ENCODE measurements at regions of chr19 and their contacts with region 1.

Region 1: GRCh38 chr19:55503502-55504251 is 15.4 kb downstream of the SSC5D start:
- DNase-seq: peak; percentile 96
- ATAC-seq: peak; percentile 94
- H3K4me3 Mint-ChIP-seq: no peak overlapping the region
- H3K27ac Mint-ChIP-seq: no peak overlapping the region
- H3K4me1 Mint-ChIP-seq: no peaks in the 10 kb centered on the region
- H3K27me3 Mint-ChIP-seq: peaks cover 86% of the 10 kb centered on the region
- CTCF ChIP-seq: peak; percentile 99

Region 2: GRCh38 chr19:55437410-55438075 is 66.1 kb before region 1 on chr19:
- CTCF ChIA-PET with region 1: interaction called, 12 read pairs
- POLR2A ChIA-PET with region 1: no interaction called
- DNase-seq: peak; percentile 85
- ATAC-seq: peak; percentile 73
- H3K4me3 Mint-ChIP-seq: no peak overlapping the region
- H3K27ac Mint-ChIP-seq: no peak overlapping the region
- H3K4me1 Mint-ChIP-seq: peaks cover 15% of the 10 kb centered on the region
- H3K27me3 Mint-ChIP-seq: peaks cover 11% of the 10 kb centered on the region
- CTCF ChIP-seq: no peak

Region 3: GRCh38 chr19:55467236-55468053 is 36.2 kb before region 1 on chr19:
- CTCF ChIA-PET with region 1: interaction called, 63 read pairs
- POLR2A ChIA-PET with region 1: no interaction called
- DNase-seq: peak; percentile 77
- ATAC-seq: peak; percentile 78
- H3K4me3 Mint-ChIP-seq: no peak overlapping the region
- H3K27ac Mint-ChIP-seq: no peak overlapping the region
- H3K4me1 Mint-ChIP-seq: peaks cover 27% of the 10 kb centered on the region
- H3K27me3 Mint-ChIP-seq: peaks cover 33% of the 10 kb centered on the region
- CTCF ChIP-seq: peak; percentile 98

Region 4: DNA sequence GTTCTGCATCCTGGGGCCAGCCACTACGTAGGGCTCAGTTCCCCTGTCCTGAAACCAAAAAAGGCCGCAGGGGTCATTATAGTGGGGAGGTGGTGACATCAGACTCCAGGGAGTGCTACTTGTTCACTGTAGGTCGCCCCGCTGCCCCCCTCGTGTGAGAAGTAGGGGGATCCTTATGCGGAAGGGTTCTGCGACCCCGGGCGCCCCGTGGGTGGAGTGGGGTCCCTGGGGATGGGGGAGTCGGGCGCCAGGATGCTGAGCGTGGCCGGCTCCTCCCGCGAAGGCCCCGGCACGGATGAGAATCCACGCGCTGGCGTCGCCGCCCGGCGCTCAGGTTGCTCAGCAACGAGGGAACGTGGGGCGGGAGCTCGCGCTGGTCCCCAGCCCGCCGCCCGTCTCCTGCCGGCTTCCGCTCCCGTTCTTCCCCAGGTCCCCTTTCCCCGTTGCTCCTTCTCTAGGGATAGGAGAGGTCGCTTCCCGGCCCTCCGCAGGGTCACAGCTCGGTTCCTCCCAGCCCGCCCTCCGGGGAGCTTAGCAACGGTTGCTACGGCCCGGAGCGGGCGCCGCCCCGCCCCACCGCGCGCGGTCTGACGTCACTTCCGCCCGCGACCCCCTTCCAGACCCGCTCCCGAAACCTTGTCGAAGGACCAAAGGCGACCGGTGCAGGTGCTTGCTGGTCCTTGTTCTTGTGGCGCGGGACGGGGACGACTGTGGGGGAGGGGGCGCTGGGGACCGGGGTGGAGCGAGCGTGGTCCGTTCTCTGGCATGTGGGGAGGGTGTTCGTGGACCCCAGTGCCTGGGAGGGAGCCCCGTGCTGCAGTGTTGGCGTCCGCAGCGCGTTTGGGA is 18.9 kb before region 1 on chr19 and contains the start of gene NAT14:
- CTCF ChIA-PET with region 1: interaction called, 96 read pairs
- POLR2A ChIA-PET with region 1: interaction called, 4 read pairs
- DNase-seq: peak; percentile 89
- ATAC-seq: peak; percentile 58
- H3K4me3 Mint-ChIP-seq: peak within 1 kb of the TSS; percentile 82
- H3K27ac Mint-ChIP-seq: peak within 1 kb of the TSS; percentile 87
- H3K4me1 Mint-ChIP-seq: peaks cover 23% of the 10 kb centered on the region
- H3K27me3 Mint-ChIP-seq: no peaks in the 10 kb centered on the region
- CTCF ChIP-seq: no peak
- total RNA-seq, gene NAT14: 71.9 to 87.7 TPM (median 74.8 TPM) in 3 replicates

Region 5: DNA sequence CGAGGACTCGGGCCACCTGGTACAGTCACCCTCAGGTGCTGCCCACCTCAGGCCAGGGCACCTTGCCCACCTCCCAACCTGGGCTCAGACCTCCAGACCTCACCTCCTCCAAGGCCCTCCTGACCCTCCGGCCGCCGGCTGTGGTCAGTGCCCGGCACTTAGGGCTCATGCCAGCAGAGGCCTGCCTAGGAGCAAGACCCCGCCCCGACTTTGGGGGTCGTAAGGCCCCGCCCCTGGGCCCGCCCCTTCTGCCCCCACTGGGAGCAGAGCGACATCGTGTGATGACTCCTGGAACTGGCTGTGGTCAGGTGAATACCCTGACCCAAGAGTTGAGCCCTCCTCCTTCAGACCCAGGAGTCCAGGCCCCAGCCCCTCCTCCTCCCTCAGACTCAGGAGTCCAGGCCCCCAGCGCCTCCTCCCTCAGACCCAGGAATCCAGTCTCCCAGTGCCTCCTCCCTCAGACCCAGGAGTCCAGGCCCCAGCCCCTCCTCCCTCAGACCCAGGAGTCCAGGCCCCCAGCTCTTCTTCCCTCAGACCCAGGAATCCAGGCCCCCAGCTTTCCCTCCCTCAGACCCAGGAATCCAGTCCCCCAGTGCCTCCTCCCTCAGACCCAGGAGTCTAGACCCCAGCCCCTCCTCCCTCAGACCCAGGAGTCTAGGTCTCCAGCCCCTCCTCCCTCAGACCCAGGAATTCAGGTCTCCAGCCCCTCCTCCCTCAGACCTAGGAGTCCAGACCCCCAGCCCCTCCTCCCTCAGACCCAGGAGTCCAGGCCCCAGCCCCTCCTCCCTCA is 33.5 kb after region 1 on chr19 and contains the start of gene SBK2:
- CTCF ChIA-PET with region 1: interaction called, 10 read pairs
- POLR2A ChIA-PET with region 1: no interaction called
- DNase-seq: peak; percentile 96
- ATAC-seq: peak; percentile 97
- H3K4me3 Mint-ChIP-seq: peak within 1 kb of the TSS; percentile 37
- H3K27ac Mint-ChIP-seq: no peak within 1 kb of the TSS
- H3K4me1 Mint-ChIP-seq: peaks cover 11% of the 10 kb centered on the region
- H3K27me3 Mint-ChIP-seq: peaks cover 7% of the 10 kb centered on the region
- CTCF ChIP-seq: 0 out of 2 replicates have a peak, but pooled peaks have one; percentile 25
- total RNA-seq, gene SBK2: 5.2 to 6.4 TPM (median 5.8 TPM) in 3 replicates

Region 6: DNA sequence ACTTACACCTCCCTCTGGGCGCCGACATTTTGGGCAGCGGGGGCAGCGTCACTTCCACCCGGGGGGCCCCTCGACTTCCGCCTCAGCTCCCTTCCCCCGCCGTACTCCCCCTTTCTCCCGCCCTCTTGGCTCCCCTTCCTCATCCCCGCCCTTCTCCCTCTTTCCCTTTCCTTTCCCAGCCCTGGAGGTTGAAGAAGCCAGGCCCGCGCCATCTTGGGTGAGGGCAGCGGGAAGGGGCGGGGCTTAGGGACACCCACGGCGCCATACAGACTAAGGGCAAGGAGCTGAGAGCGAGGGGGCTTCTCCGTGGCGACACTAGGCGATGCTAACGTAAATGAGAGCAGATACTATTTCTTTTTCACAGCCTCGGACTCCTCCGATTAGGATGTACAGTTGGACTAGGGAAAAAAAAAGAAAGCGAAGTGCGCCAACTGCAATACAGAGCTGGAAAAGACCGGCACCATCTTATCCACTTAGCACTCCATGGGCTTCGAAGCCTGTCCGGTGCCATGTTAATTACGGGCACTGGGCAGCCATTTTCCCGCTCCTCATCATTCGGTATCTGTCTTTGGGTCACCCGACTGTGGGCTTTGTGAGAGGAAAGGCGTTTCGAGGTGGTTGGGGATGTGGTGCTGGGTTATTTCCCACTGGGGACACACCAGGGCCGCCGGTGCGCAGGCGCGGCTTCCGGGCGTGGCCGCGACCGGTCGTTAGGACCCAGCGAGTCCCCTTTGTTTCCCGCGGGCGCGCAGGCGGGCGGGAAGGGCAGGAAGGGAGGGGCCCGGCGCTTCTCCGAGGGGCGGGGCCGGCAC is 96.0 kb after region 1 on chr19 and contains the start of gene FIZ1:
- CTCF ChIA-PET with region 1: interaction called, 16 read pairs
- POLR2A ChIA-PET with region 1: no interaction called
- DNase-seq: peak; percentile 98
- ATAC-seq: peak; percentile 54
- H3K4me3 Mint-ChIP-seq: peak within 1 kb of the TSS; percentile 98
- H3K27ac Mint-ChIP-seq: peak within 1 kb of the TSS; percentile 100
- H3K4me1 Mint-ChIP-seq: peaks cover 29% of the 10 kb centered on the region
- H3K27me3 Mint-ChIP-seq: no peaks in the 10 kb centered on the region; the same call in 1 of the 2 replicates
- CTCF ChIP-seq: no peak
- total RNA-seq, gene FIZ1: 20.1 to 22.7 TPM (median 20.6 TPM) in 3 replicates

Region 7: DNA sequence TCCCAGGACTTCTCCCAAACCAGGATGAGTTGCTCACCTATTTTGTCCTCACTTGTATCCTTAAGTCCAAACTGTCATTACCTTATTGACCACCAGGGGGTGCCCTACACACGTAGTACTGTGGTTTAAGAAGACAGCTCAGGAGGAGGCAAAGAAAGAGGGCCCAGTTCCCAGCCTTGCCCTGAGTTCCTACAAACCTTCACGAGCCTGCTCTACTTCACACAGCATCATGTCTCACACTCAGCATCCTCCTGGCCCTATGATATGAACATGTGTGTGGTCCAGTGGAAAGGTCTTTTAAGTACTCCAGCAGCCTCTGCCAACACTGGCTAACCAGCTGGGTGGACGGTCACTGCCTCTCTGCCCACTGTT is 128.8 kb after region 1 on chr19:
- CTCF ChIA-PET with region 1: interaction called, 19 read pairs
- POLR2A ChIA-PET with region 1: no interaction called
- DNase-seq: peak; percentile 92
- ATAC-seq: peak; percentile 61
- H3K4me3 Mint-ChIP-seq: peak overlapping the region; percentile 20; the same call in 1 of the 2 replicates
- H3K27ac Mint-ChIP-seq: peak overlapping the region; percentile 80
- H3K4me1 Mint-ChIP-seq: peaks cover 29% of the 10 kb centered on the region
- H3K27me3 Mint-ChIP-seq: peaks cover 9% of the 10 kb centered on the region; the same call in 1 of the 2 replicates
- CTCF ChIP-seq: peak; percentile 87

Measured in WTC11 (cell line).